HepG2 (cell line): ENCODE measurements at regions of chr7 and their contacts with region 1.

Region 1: GRCh38 chr7:138151731-138152577 is 75.7 kb downstream of the AKR1D1 start:
- DNase-seq: peak; percentile 92
- ATAC-seq: peak; percentile 92
- H3K4me3 ChIP-seq: no peak overlapping the region
- H3K27ac ChIP-seq: peak overlapping the region; percentile 84
- H3K4me1 ChIP-seq: peaks cover 43% of the 10 kb centered on the region
- H3K27me3 ChIP-seq: no peaks in the 10 kb centered on the region
- CTCF ChIP-seq: no peak
- EP300 ChIP-seq: peak; percentile 30 to 89; a peak in 2 of 4 replicates
- POLR2A ChIP-seq: no peak
- RAD21 ChIP-seq: no peak

Region 2: DNA sequence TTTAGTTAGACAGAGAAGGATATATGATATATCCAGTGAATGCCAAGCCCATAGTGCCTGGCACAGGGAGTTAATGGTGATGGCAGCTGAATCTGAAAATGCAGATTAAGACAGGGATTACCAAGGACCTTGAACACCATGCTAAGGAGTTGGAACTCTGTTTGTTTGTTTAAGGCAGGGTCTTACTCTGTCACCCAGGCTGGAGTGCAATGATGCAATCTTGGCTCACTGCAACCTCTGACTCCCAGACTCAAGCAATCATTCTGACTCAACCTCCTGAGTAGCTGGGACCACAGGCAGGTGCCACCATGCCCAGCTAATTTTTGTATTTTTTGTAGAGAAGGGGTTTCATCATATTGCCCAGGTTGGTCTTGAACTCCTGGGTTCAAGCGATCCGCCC is 74.1 kb before region 1 on chr7:
- CTCF ChIA-PET with region 1: no interaction called
- POLR2A ChIA-PET with region 1: no interaction called
- in situ Hi-C with region 1: no loop called
- intact Hi-C with region 1: no loop called
- DNase-seq: no peak
- ATAC-seq: no peak
- H3K4me3 ChIP-seq: no peak overlapping the region
- H3K27ac ChIP-seq: peak overlapping the region; percentile 7
- H3K4me1 ChIP-seq: peaks cover 32% of the 10 kb centered on the region
- H3K27me3 ChIP-seq: no peaks in the 10 kb centered on the region
- CTCF ChIP-seq: no peak
- EP300 ChIP-seq: peak in 1 of 2 experiments; percentile 60; a peak in 1 of 4 replicates
- POLR2A ChIP-seq: no peak
- RAD21 ChIP-seq: no peak

Region 3: DNA sequence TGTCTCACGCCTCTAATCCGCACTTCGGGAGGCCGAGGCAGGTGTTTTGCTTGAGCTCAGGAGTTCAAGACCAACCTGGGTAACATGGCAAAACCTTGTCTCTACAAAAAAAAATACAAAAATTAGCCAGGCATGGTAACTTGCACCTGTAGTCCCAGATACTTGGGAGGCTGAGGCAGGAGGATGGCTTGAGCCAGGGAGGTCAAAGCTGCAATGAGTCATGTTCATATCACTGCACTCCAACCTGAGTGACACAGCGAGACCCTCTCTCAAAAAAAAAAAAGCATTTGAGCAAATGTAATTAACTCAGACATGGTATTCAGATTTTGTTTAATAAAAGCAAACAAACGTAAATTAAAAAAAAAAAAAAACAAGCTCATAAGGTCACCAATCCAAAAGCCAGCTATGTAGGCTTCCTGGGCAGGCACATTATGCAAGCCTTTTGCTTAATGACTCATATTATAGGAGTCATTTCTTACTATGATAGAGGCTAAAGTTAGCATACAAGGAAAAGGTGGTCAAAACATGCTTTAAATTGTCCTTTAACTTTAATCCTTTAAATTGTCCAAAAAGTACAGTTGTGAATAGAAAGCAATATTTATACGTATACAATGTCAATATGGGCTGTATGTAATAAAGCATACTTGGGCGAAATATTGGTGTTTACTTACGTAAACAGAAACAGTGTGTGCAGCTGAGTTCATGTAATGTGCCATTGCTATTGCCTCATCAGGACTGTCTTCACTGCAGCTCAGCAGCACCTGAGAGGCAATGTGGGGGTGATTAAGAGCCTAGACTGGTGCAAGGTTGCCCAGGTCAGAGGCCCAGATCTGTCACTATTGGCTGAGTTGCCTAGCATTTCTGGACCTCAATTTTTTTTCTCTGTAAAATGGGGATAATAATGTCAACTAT is 62.6 kb before region 1 on chr7:
- CTCF ChIA-PET with region 1: no interaction called
- POLR2A ChIA-PET with region 1: no interaction called
- in situ Hi-C with region 1: no loop called
- intact Hi-C with region 1: loop called (anchors 5 kb)
- DNase-seq: peak; percentile 48
- ATAC-seq: peak; percentile 61
- H3K4me3 ChIP-seq: no peak overlapping the region
- H3K27ac ChIP-seq: peak overlapping the region; percentile 36
- H3K4me1 ChIP-seq: peaks cover 50% of the 10 kb centered on the region
- H3K27me3 ChIP-seq: no peaks in the 10 kb centered on the region
- CTCF ChIP-seq: no peak
- EP300 ChIP-seq: peak in 1 of 2 experiments; percentile 66; a peak in 2 of 4 replicates
- POLR2A ChIP-seq: no peak
- RAD21 ChIP-seq: no peak